Left ventricle myocardium inferior (tissue), 1 donor: ENCODE measurements at regions of chr10 and their contacts with region 1.

Region 1: DNA sequence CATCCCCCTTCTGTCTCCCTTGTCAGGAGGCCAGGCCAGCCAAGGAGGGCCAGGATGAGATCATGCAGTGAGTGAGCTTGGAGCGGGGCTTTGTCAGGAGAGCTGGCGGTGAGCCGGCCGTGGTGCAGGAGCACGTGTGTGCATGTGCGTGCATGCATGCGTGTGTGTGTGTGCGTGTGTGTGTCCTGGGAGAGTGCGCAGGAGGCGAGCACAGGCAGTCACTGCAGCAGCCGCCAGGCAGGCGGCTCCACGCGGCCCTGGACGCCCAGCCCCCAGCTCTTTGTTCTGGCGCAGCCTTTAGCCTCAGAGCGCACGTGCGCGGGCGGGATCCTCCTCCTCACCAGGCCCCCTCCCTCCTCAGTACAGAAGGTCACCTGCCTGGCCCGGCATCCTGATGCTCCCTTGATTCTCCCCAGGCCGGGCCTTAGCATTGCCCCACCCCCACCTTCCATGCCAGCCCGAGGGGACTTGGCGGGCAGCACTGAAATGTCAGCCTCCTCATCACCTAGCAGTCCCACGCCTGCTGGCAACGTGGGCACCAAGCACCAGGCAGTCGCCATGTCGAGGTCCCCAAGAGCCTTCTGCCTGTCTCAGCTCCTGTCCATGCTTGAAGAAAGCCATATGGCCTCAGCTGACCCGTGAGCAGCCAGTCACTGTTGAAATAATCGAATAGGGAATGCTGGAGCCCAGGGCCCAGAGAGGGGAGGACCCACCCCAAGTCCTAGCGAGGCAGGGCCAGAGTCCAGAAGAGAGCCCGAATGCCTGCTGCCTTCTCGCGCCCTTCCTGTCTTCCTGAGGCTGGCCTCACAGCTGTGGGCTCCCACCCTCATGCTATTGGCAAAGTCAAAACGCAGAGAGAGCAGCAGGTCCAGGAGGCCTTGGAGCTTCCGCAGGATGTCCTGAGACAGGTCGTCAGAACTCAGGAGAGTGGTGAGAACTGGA is 125.9 kb upstream of the PPIF start:
- DNase-seq: peak; percentile 83
- H3K4me3 ChIP-seq: peak overlapping the region; percentile 7
- H3K27ac ChIP-seq: peak overlapping the region; percentile 94
- H3K4me1 ChIP-seq: peaks cover 66% of the 10 kb centered on the region
- H3K27me3 ChIP-seq: no peaks in the 10 kb centered on the region
- CTCF ChIP-seq: peak; percentile 44

Region 2: GRCh38 chr10:79274279-79275104 is 53.1 kb after region 1 on chr10:
- intact Hi-C with region 1: loop called (anchors 10 kb)
- DNase-seq: peak; percentile 89
- H3K4me3 ChIP-seq: peak overlapping the region; percentile 35
- H3K27ac ChIP-seq: peak overlapping the region; percentile 93
- H3K4me1 ChIP-seq: peaks cover 88% of the 10 kb centered on the region
- H3K27me3 ChIP-seq: no peaks in the 10 kb centered on the region
- CTCF ChIP-seq: peak; percentile 45

Region 3: GRCh38 chr10:79292891-79293746 is 71.7 kb after region 1 on chr10:
- intact Hi-C with region 1: no loop called
- DNase-seq: no peak
- H3K4me3 ChIP-seq: no peak overlapping the region
- H3K27ac ChIP-seq: peak overlapping the region; percentile 66
- H3K4me1 ChIP-seq: peaks cover 53% of the 10 kb centered on the region
- H3K27me3 ChIP-seq: no peaks in the 10 kb centered on the region
- CTCF ChIP-seq: peak; percentile 50